ENCODE measurements at regions of chr16 and their contacts with region 1.

Region 1: DNA sequence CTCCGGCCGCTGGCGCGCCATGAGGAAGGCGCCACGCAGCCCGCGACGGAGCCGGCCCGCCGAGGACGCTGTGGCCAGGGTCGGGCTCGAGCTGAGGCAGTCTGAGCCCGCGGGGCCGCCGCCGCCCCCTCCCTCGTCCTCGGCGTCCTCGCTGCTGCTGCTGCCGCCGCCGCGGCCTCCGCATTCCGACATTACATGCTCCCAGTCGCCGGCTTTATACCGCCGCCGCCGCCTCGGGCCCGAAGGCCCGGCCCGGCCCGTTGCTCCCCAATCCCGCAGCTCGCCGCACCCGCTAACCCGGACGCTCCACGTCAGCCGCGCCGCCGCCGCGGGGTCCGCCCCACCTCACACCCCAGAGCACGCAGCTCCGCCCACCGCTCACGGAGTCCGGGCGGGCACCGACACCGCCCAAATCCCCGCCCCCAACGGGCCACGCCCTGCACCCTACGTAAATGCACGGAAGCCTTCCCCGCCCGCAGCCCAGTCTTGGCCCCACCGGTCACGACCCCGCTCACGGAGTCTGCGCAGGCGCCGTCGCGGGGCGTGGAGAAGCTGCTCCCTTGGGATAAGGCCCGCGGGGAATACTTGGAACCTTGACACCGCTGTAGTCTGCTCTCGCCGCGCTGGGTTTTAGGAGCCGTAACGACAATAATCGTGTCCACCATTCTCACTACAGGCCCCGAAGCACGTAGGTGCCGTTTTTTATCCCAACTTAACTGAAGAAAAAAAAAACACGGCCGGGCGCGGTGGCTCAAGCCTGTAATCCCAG is at the start of gene TXNDC11:
- DNase-seq: peak; percentile 98 to 100 (median 99)
- ATAC-seq: peak; percentile 92
- H3K4me3 ChIP-seq: peak within 1 kb of the TSS; percentile 95
- H3K4me3 Mint-ChIP-seq: peak within 1 kb of the TSS; percentile 96
- H3K27ac ChIP-seq: peak within 1 kb of the TSS; percentile 86 to 92
- H3K27ac Mint-ChIP-seq: peak within 1 kb of the TSS; percentile 99
- H3K4me1 ChIP-seq: peaks cover 52% of the 10 kb centered on the region
- H3K4me1 Mint-ChIP-seq: peaks cover 60% of the 10 kb centered on the region
- H3K27me3 ChIP-seq: no peaks in the 10 kb centered on the region
- H3K27me3 Mint-ChIP-seq: no peaks in the 10 kb centered on the region
- CTCF ChIP-seq: no peak
- total RNA-seq, gene TXNDC11: 111 to 112 TPM

Region 2: DNA sequence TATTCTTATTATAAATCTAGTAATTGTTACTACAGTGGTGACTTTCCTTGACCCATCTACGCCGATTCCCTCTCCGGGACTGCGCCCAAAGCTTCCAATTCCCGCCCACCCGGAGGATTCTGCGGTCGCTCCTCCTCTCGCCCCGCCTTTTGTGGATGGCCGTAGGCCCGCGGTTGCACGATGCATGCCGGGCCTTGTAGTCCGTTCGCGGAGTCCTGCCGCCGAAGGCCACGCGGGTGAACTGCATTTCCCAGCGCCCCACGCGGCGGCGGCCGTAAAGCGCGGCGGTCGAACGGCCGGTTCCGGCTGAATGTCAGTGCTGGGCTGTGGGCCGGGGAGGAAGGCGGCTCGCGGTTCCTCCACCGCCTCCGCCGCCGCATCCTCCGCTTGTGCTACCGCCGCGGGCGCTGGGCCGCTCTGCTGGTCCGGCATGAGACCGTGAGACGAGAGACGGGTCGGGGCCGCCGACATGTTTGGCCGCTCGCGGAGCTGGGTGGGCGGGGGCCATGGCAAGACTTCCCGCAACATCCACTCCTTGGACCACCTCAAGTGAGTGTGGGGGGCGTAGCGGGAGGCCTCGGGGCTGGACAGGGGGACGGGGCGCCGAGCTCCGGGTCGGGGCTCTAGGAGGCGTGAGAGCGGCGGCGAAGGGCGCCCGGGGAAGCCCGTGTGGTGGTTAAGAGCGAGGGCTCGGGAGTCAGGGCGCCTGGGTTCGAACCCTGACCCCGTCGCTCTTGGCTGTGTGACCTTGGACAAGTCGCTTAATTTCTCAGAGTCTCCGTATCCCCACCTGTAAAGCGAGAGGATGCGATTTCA is 798.3 kb before region 1 on chr16 and contains the start of gene CLEC16A:
- CTCF ChIA-PET with region 1: no interaction called
- POLR2A ChIA-PET with region 1: interaction called, 5 read pairs
- intact Hi-C with region 1: loop called in 1 of 2 experiments (anchors 5 kb)
- DNase-seq: peak; percentile 89 to 98 (median 95)
- ATAC-seq: peak; percentile 76
- H3K4me3 ChIP-seq: peak within 1 kb of the TSS; percentile 85
- H3K4me3 Mint-ChIP-seq: peak within 1 kb of the TSS; percentile 96
- H3K27ac ChIP-seq: peak within 1 kb of the TSS in 1 of 2 donors; percentile 55
- H3K27ac Mint-ChIP-seq: peak within 1 kb of the TSS; percentile 76
- H3K4me1 ChIP-seq: peaks cover 73% of the 10 kb centered on the region
- H3K4me1 Mint-ChIP-seq: peaks cover 73% of the 10 kb centered on the region
- H3K27me3 ChIP-seq: no peaks in the 10 kb centered on the region
- H3K27me3 Mint-ChIP-seq: no peaks in the 10 kb centered on the region
- CTCF ChIP-seq: no peak
- total RNA-seq, gene CLEC16A: 21.7 to 22.7 TPM

Region 3: GRCh38 chr16:11667824-11668622 is 74.7 kb before region 1 on chr16 and contains the start of gene SNN:
- CTCF ChIA-PET with region 1: no interaction called
- POLR2A ChIA-PET with region 1: interaction called, 18 read pairs
- intact Hi-C with region 1: loop called in 1 of 2 experiments (anchors 5 kb)
- DNase-seq: peak; percentile 72 to 94 (median 84)
- ATAC-seq: peak; percentile 84
- H3K4me3 ChIP-seq: peak within 1 kb of the TSS; percentile 62
- H3K4me3 Mint-ChIP-seq: peak within 1 kb of the TSS; percentile 97
- H3K27ac ChIP-seq: peak within 1 kb of the TSS; percentile 57
- H3K27ac Mint-ChIP-seq: peak within 1 kb of the TSS; percentile 94
- H3K4me1 ChIP-seq: peaks cover 88% of the 10 kb centered on the region
- H3K4me1 Mint-ChIP-seq: peaks cover 73% of the 10 kb centered on the region
- H3K27me3 ChIP-seq: no peaks in the 10 kb centered on the region
- H3K27me3 Mint-ChIP-seq: no peaks in the 10 kb centered on the region
- CTCF ChIP-seq: no peak
- total RNA-seq, gene SNN: 76.3 to 79.7 TPM

Region 4: GRCh38 chr16:11851294-11852091 is 108.8 kb after region 1 on chr16 and contains the start of gene RSL1D1:
- CTCF ChIA-PET with region 1: no interaction called
- POLR2A ChIA-PET with region 1: interaction called, 10 read pairs
- intact Hi-C with region 1: loop called in 1 of 2 experiments (anchors 2 kb)
- DNase-seq: peak; percentile 87 to 98 (median 92)
- ATAC-seq: peak; percentile 85
- H3K4me3 ChIP-seq: peak within 1 kb of the TSS; percentile 75
- H3K4me3 Mint-ChIP-seq: peak within 1 kb of the TSS; percentile 97
- H3K27ac ChIP-seq: peak within 1 kb of the TSS; percentile 78 to 86
- H3K27ac Mint-ChIP-seq: peak within 1 kb of the TSS; percentile 96
- H3K4me1 ChIP-seq: peaks cover 42% of the 10 kb centered on the region
- H3K4me1 Mint-ChIP-seq: peaks cover 68% of the 10 kb centered on the region
- H3K27me3 ChIP-seq: no peaks in the 10 kb centered on the region
- H3K27me3 Mint-ChIP-seq: no peaks in the 10 kb centered on the region
- CTCF ChIP-seq: no peak
- total RNA-seq, gene RSL1D1: 224 to 237 TPM